AG04449 (cell line): ENCODE measurements at regions of chr5 and their contacts with region 1.

Region 1: DNA sequence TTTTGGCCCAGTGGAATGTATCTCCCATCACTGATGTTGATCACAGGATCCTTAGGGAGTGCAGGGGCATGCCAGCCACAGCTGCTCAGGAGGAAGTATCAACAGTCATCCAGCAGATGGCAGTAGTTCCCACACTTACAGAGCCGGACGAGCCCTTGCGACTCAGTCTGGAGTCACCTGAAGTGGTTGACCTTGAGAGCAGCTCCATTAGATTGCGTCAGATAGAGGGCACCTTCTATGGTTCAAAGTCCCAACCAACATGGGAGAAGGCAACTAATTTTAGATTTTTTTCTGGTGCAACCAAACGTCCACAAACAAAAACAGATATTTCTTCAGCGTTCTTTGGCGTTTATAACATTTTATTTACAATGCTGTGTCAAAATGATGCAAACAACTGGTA is 124.5 kb downstream of the EGFLAM start:
- DNase-seq: no peak
- H3K4me3 ChIP-seq: no peak overlapping the region
- CTCF ChIP-seq: peak; percentile 89

Region 2: GRCh38 chr5:38396766-38397165 is 13.9 kb after region 1 on chr5:
- CTCF ChIA-PET with region 1: interaction called, 22 read pairs
- POLR2A ChIA-PET with region 1: no interaction called
- DNase-seq: no peak
- H3K4me3 ChIP-seq: no peak overlapping the region
- CTCF ChIP-seq: no peak

Region 3: GRCh38 chr5:38414348-38414747 is 31.4 kb after region 1 on chr5:
- CTCF ChIA-PET with region 1: interaction called, 48 read pairs
- POLR2A ChIA-PET with region 1: no interaction called
- DNase-seq: no peak
- H3K4me3 ChIP-seq: no peak overlapping the region
- CTCF ChIP-seq: no peak

Region 4: GRCh38 chr5:38433160-38433861 is 50.4 kb after region 1 on chr5:
- CTCF ChIA-PET with region 1: interaction called, 19 read pairs
- POLR2A ChIA-PET with region 1: no interaction called
- DNase-seq: peak; percentile 77
- H3K4me3 ChIP-seq: no peak overlapping the region
- CTCF ChIP-seq: no peak

Region 5: GRCh38 chr5:38660194-38660668 is 277.3 kb after region 1 on chr5:
- CTCF ChIA-PET with region 1: interaction called, 13 read pairs
- POLR2A ChIA-PET with region 1: no interaction called
- DNase-seq: no peak
- H3K4me3 ChIP-seq: no peak overlapping the region
- CTCF ChIP-seq: no peak

Region 6: DNA sequence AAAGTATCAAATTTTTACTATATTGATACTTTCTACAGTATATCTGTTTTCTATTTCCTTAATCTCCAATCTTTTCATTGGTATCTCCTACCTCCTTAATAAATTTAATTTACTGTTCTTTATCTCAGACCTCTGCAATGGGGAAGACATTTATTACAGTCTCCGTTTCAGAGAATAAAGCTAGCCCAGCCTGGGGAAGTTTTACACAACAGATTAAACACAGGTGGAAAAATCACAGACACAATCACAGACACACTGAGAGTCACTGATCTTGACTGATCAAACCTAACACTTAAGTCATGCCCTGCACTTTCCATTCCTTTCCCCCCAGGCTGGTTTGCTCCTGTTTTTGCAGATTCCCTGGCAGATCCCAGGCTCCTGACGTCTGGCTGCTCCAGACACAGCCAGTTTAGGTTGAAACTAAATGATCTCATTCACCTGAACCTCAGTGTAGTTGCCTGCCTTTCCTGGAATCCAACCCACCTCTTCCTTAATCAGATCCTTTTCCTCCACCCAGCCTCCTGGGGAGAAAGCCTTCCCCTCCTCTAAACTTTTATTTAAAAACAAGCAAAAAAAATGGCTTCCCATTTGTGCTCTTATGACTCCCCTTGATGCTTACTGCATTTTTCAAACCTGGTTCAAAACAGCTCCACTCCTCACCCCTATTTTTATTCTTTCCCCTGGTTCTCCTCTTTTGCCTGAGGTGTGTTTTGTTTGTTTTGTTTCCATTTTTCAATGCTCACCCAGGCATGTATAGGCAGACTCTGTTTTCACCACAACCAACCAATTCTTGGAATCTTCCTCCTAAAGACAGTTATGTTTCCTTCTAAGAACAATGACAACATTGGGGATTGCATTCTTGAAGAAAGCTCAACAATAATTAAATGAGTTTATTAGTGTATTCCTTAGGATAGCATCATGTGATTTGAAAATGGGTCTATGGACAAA is 433.5 kb after region 1 on chr5:
- CTCF ChIA-PET with region 1: interaction called, 151 read pairs
- POLR2A ChIA-PET with region 1: no interaction called
- DNase-seq: no peak
- H3K4me3 ChIP-seq: no peak overlapping the region
- CTCF ChIP-seq: no peak